Activated CD4-positive, alpha-beta T cell treated with anti-CD3 and anti-CD28 coated beads, Interleukin-2, amount 10 ng/mL, durations not matched to agents 24 days and 14 days (primary cell): ENCODE measurements at regions of chr7 and their contacts with region 1.

Region 1: DNA sequence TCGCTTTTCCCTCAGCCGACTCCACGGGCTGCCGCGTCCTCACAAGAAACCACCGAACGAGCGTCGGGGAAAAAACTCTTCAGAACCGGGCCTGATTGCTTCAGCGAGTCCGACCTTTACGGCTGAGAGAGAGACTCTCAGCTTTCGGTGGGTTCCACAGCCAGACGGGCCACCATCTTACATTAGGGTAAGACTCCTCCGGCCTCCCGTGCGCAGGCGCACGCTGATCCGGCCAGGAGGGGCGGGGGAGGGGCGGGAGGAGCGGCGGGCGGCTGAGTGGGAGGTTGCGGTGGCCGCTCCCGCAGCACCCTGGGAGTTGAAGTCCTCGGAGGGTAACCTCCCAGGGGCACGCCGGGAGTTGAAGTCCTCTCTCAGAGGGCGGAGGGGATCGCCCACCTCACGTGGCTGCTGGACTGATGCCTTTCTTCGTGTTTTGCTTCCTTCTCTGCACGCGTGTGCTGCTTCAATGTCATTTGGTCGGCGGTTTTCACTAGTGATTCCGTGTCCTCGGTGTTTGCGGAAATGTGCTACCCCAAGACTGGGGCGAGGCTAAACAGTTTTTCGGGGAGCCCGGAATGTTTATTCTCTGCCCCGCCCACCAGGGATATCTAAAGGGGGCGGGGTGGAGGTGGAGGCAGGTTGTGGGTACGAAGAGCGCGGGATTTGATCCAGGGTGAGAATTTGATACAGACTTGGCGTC is at the start of gene CNOT4:
- DNase-seq: peak; percentile 97
- H3K4me3 Mint-ChIP-seq: no peak within 1 kb of the TSS
- H3K27ac Mint-ChIP-seq: no peak within 1 kb of the TSS
- H3K4me1 Mint-ChIP-seq: peaks cover 13% of the 10 kb centered on the region
- H3K27me3 Mint-ChIP-seq: no peaks in the 10 kb centered on the region
- total RNA-seq, gene CNOT4: 21.1 and 26.3 TPM in 2 replicates

Region 2: GRCh38 chr7:135281363-135281949 is 228.6 kb before region 1 on chr7:
- intact Hi-C with region 1: loop called (anchors 1 kb)
- DNase-seq: peak; percentile 93
- H3K4me3 Mint-ChIP-seq: no peak overlapping the region
- H3K27ac Mint-ChIP-seq: no peak overlapping the region
- H3K4me1 Mint-ChIP-seq: peaks cover 13% of the 10 kb centered on the region
- H3K27me3 Mint-ChIP-seq: peaks cover 10% of the 10 kb centered on the region

Region 3: DNA sequence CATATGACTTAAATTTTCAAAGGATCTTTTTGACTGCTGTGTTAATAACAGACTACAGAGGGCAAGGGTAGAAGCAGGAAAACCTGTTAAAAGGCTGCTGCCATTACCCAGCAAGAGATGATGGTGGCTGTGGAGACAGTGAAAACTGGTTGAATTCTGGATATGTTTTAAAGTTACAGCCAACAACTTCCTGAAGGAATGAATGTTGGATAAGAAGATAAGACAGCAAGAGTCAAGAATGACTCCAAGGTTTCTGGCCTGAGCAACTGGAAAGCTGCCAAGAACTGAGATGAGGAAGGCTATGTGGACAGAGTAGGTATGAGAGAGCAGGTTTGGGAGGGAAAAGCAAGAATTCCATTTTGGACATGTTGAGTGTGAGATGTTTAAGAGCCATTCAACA is 19.3 kb before region 1 on chr7:
- intact Hi-C with region 1: no loop called
- DNase-seq: no peak
- H3K4me3 Mint-ChIP-seq: no peak overlapping the region
- H3K27ac Mint-ChIP-seq: no peak overlapping the region
- H3K4me1 Mint-ChIP-seq: peaks cover 4% of the 10 kb centered on the region
- H3K27me3 Mint-ChIP-seq: no peaks in the 10 kb centered on the region

Region 4: GRCh38 chr7:135558337-135558767 is 48.3 kb after region 1 on chr7:
- intact Hi-C with region 1: loop called (anchors 1 kb)
- DNase-seq: peak; percentile 89
- H3K4me3 Mint-ChIP-seq: no peak overlapping the region
- H3K27ac Mint-ChIP-seq: no peak overlapping the region
- H3K4me1 Mint-ChIP-seq: peaks cover 14% of the 10 kb centered on the region
- H3K27me3 Mint-ChIP-seq: peaks cover 2% of the 10 kb centered on the region

Region 5: DNA sequence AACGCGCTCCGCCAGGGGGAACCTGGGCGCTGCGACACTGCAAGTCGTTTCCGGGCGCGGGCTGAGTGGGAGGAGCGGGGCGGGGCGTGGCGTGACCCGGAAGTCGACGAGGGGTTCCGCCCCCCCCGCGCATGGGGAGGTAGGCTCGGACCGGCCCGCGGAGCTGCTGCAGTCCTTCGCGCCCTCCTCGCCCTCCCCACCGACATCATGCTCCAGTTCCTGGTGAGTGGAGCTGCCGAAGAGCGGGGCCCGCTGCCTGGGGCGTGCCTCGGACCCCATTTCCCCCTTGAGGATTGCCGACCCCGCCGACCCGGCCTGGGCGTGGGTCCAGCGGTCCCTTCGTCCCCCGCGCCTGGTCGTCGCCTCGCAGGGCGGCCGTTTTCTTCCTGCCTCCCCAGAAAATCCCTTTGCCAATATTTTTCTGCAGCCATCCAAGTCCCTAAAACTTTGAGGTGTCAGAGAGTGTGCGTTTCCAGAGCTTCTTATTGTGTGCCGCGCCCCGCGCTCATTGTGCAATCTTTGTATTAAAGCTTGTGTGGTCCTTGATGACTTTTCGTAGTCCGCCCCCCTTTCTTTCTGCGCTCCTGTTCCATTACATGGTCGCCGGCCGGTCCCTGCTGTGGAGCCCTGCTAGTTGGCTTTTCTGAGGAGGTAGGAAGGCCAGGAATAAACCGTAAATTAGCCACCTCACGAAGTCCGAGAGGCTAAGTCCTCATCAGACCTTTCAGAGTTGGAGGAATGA is 152.5 kb after region 1 on chr7 and contains the start of gene STMP1:
- intact Hi-C with region 1: loop called (anchors 1 kb)
- DNase-seq: peak; percentile 99
- H3K4me3 Mint-ChIP-seq: peak within 1 kb of the TSS; percentile 94
- H3K27ac Mint-ChIP-seq: peak within 1 kb of the TSS; percentile 91
- H3K4me1 Mint-ChIP-seq: peaks cover 33% of the 10 kb centered on the region
- H3K27me3 Mint-ChIP-seq: no peaks in the 10 kb centered on the region
- total RNA-seq, gene STMP1: 23.5 and 25.8 TPM in 2 replicates